ENCODE measurements at regions of chr3 and their contacts with region 1.

Region 1: GRCh38 chr3:14787630-14788029 is 31.1 kb upstream of the FGD5 start:
- DNase-seq: no peak
- H3K4me3 ChIP-seq: no peak overlapping the region
- H3K27ac ChIP-seq: no peak overlapping the region
- H3K4me1 ChIP-seq: no peaks in the 10 kb centered on the region
- H3K27me3 ChIP-seq: peaks cover 6% of the 10 kb centered on the region
- CTCF ChIP-seq: no peak

Region 2: GRCh38 chr3:14757153-14757700 is 30.4 kb before region 1 on chr3:
- dilution Hi-C with region 1: no loop called
- DNase-seq: no peak
- H3K4me3 ChIP-seq: no peak overlapping the region
- H3K27ac ChIP-seq: no peak overlapping the region
- H3K4me1 ChIP-seq: no peaks in the 10 kb centered on the region
- H3K27me3 ChIP-seq: no peaks in the 10 kb centered on the region
- CTCF ChIP-seq: no peak

Region 3: DNA sequence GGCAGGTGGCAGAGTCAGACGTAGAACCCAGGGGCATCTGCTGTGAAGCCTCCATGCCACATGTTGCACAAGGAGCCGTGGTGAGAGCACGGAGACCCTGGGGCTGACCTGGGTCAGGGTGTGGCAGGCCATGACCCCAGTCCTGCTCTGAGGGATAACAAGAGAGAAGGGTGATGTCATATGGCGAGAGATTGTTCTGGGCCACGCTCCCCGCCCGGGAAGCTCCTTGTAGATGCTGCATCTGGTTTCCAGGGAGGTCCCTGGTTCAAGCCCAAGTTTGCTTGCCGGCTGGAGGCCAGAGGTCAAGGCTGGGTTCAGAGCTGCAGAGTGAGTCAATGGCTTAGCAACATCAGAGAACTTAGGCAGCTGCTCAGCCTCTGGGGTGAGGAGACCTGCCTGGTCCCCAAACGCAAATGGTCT is 48.4 kb after region 1 on chr3:
- dilution Hi-C with region 1: loop called (anchors 5 kb)
- DNase-seq: no peak
- H3K4me3 ChIP-seq: no peak overlapping the region
- H3K27ac ChIP-seq: no peak overlapping the region
- H3K4me1 ChIP-seq: no peaks in the 10 kb centered on the region
- H3K27me3 ChIP-seq: peaks cover 16% of the 10 kb centered on the region
- CTCF ChIP-seq: no peak